H1 (cell line): ENCODE measurements at regions of chr2 and their contacts with region 1.

Region 1: DNA sequence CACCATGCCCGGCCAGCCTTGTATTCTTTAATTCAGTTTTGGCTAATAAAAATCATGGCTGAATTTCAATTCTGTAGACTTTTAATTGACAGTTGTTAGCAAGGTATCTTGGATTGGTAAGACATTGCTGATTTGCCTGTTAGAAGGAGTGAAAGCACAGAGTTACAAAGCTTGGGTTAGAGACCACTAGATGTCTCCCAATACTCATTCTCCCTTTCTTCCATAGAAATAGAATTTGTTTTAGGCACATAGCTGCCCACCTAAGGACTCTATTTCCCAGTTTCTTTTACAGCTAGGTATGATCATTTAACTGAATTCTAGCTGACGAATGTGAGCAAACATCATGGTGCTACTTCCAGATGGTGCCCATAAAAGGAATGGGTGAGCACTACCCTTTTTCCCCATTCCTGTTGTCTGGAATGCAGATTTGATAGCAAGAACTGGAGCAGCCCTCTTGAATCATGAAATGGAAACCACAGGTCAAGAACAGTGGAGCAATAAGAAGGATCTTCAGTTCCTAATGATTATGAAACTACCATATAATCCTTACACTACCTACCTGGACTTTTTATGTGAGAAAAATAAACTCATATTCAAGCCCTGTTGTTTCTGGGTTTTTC is 17.5 kb downstream of the PECR start:
- DNase-seq: no peak
- H3K4me3 ChIP-seq: no peak overlapping the region
- H3K27ac ChIP-seq: no peak overlapping the region
- H3K4me1 ChIP-seq: peaks cover 0 to 3% (median under 1%) of the 10 kb centered on the region in 4 experiments; a peak in 1 of 7 replicates
- H3K27me3 ChIP-seq: no peaks in the 10 kb centered on the region
- CTCF ChIP-seq: peak in 2 of 3 experiments; percentile 14 to 38; a peak in 2 of 4 replicates
- EP300 ChIP-seq: no peak
- POLR2A ChIP-seq: no peak
- RAD21 ChIP-seq: peak; percentile 54 to 61

Region 2: DNA sequence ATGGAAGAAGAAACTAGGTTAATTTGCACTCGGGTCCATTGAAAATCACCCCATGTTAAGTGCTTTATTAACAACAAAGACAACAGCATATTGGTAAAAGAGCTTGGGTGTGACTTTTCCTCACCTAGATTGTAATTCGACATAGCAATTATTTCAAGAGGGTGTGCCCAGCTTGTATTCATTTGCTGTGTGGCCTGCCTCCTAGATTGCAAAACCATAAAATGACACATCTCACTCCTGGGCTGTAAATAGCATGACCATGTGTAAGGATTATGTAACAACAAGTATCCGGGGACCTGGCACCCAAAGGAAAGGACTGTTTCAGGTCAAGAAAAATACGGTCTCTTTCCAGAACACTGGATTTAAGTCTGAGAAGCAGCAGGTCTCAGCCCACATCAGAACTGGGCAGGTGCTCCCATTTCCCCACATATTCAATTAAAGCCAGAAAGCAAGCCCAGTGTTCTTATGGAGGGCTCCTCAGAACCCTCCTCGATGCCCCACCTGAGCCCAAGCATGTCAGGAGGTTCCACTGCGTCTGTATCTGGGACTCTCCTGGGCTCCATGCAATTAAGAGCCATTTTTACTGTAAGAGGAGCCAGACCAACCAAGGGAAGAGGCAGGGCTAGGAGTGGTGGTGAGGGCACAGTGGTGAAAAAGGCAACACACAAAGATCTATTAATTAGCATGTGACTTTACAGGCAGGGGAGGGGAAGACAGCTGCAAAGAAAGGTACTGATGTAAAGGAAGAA is 90.0 kb before region 1 on chr2:
- CTCF ChIA-PET with region 1: no interaction called
- POLR2A ChIA-PET with region 1: no interaction called
- DNase-seq: no peak
- H3K4me3 ChIP-seq: no peak overlapping the region
- H3K27ac ChIP-seq: no peak overlapping the region
- H3K4me1 ChIP-seq: peaks cover 0 to 14% (median 7%) of the 10 kb centered on the region in 4 experiments; a peak in 3 of 7 replicates
- H3K27me3 ChIP-seq: no peaks in the 10 kb centered on the region
- CTCF ChIP-seq: no peak
- EP300 ChIP-seq: no peak
- POLR2A ChIP-seq: no peak
- RAD21 ChIP-seq: no peak

Region 3: DNA sequence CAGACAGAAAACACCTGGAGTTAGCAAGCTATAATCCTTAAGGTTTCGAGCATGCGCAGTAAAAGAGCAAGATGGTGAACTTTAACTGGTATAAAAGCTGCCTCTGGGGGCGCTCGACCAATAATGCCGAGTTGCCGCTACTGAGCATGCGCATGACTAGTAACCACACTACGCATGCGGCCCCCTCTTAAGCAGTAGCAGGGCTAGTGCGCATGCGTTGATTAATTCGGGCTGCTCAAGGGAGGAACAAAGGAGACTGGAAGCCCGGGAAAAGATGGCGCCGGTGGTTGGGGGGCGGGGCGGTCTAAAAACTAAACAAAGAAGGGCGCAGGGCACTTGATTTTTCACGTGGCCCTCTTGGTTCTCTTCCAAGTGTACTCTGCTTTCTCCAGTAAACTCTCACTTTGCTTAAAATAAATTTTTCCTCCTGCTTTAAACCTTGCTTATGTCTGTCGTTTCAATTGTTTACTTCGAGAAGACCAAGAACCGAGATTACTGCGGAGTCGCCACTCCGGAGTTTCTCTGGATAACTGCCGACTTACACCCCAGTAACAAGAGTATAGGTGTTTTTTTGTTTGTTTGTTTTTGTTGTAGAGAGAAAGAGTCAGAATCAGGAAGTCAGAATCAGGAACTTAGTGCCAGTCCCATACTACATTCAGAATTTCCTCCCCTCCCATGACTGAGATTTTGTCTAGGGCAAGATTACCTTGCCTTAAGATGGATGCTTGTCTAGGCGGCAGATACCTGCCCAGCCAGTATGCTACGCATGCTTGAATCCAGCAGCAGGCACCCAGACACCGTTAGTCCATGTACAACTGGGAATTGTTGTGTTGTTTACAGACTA is 50.8 kb after region 1 on chr2:
- CTCF ChIA-PET with region 1: interaction called, 10 read pairs
- POLR2A ChIA-PET with region 1: interaction called, 6 read pairs
- DNase-seq: peak; percentile 98 to 99
- H3K4me3 ChIP-seq: peak overlapping the region in 3 of 4 experiments; percentile 17 to 56 (median 24); a peak in 4 of 8 replicates
- H3K27ac ChIP-seq: peak overlapping the region; percentile 92
- H3K4me1 ChIP-seq: peaks cover 6 to 15% (median 10%) of the 10 kb centered on the region in 4 experiments; a peak in 6 of 7 replicates
- H3K27me3 ChIP-seq: no peaks in the 10 kb centered on the region
- CTCF ChIP-seq: peak; percentile 68 to 93 (median 75)
- EP300 ChIP-seq: no peak
- POLR2A ChIP-seq: peak; percentile 70 to 89
- RAD21 ChIP-seq: no peak; a peak in 1 of 4 replicates